HepG2 (cell line): ENCODE measurements at regions of chr1 and their contacts with region 1.

Region 1: DNA sequence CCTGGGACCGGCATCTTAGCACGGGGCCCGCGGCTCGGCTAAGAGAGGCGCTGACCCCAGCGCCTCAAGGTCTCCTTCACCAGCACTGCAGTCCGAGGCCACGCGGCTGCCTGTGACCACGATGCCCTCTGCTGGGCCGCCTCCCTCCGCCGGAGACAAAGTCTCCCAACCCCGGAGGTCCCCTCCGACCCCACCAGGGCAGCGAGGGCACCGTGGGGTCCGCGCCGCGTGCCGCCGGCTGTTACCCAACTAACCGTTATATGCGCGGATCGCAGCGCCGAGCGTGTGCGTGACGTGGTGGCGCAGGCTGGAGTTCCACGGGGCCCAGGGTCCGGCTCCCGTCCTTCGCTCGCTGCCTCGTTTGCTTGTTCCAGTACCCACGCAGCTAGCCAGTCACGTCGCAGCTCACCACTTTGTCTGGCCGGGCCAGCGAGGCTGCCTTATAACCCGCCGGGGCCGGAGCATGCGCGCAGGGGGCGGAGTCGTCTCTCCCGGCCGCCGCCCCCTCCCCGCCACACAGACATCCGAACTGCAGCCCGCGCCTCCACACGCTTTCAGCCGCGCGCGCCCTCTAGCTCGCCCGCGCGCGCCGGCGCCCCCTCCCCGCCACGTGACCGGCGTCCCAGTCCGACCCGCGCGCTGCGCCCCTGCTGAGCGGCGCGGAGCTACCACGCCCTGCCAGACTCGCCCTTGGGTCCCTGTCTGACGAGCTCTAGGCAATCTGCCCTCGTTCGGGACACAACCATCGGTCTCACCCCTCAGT is at the start of gene SLC16A1:
- DNase-seq: peak; percentile 82
- ATAC-seq: peak; percentile 85
- H3K4me3 ChIP-seq: peak within 1 kb of the TSS; percentile 78 to 91 (median 83)
- H3K27ac ChIP-seq: peak within 1 kb of the TSS; percentile 87
- H3K4me1 ChIP-seq: peaks cover 69% of the 10 kb centered on the region
- H3K27me3 ChIP-seq: no peaks in the 10 kb centered on the region; a peak in 1 of 5 replicates
- CTCF ChIP-seq: peak; percentile 69
- EP300 ChIP-seq: peak in 1 of 2 experiments; percentile 41; a peak in 1 of 4 replicates
- POLR2A ChIP-seq: peak; percentile 97 to 99
- RAD21 ChIP-seq: peak; percentile 60; the same call in 1 of the 2 replicates
- total RNA-seq, gene SLC16A1: 67.0 and 106 TPM in 2 replicates

Region 2: GRCh38 chr1:112754116-112754628 is 201.8 kb before region 1 on chr1:
- CTCF ChIA-PET with region 1: no interaction called
- POLR2A ChIA-PET with region 1: no interaction called
- in situ Hi-C with region 1: no loop called
- intact Hi-C with region 1: no loop called
- DNase-seq: no peak
- ATAC-seq: no peak
- H3K4me3 ChIP-seq: no peak overlapping the region
- H3K27ac ChIP-seq: no peak overlapping the region
- H3K4me1 ChIP-seq: no peaks in the 10 kb centered on the region
- H3K27me3 ChIP-seq: no peaks in the 10 kb centered on the region; a peak in 2 of 5 replicates
- CTCF ChIP-seq: no peak
- EP300 ChIP-seq: no peak
- POLR2A ChIP-seq: no peak
- RAD21 ChIP-seq: no peak

Region 3: DNA sequence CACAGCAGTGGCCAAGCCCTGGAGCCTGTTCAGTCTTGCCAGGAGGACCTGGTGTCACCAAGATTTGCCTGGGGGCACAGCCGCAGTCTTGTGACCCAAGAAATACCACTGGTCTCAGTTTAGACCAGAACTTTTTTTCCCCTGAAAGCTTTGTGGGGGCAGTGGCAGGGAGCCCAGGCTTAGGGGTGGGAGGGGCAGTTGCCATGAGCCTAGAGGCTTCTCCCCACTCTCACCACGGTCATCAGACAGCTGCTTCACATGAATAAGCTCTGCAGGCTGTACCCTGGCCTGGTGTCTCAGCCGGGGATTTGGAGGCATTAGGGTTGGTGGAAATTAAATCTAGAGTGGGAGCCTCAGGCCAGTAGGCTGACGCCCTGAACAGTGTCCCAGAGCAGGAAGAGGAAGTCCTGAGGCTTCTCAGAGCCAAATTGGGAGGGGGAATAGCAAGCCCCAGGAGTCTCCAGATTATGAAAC is 73.7 kb before region 1 on chr1:
- CTCF ChIA-PET with region 1: interaction called, 6 read pairs
- POLR2A ChIA-PET with region 1: interaction called, 6 read pairs
- in situ Hi-C with region 1: no loop called
- intact Hi-C with region 1: loop called (anchors 5 kb)
- DNase-seq: no peak
- ATAC-seq: peak; percentile 57
- H3K4me3 ChIP-seq: peak overlapping the region; percentile 11 to 48 (median 42); a peak in 5 of 6 replicates
- H3K27ac ChIP-seq: no peak overlapping the region
- H3K4me1 ChIP-seq: peaks cover 26% of the 10 kb centered on the region
- H3K27me3 ChIP-seq: peaks cover 5 to 15% of the 10 kb centered on the region in 2 experiments; a peak in 3 of 5 replicates
- CTCF ChIP-seq: no peak
- EP300 ChIP-seq: no peak
- POLR2A ChIP-seq: no peak
- RAD21 ChIP-seq: no peak

Region 4: DNA sequence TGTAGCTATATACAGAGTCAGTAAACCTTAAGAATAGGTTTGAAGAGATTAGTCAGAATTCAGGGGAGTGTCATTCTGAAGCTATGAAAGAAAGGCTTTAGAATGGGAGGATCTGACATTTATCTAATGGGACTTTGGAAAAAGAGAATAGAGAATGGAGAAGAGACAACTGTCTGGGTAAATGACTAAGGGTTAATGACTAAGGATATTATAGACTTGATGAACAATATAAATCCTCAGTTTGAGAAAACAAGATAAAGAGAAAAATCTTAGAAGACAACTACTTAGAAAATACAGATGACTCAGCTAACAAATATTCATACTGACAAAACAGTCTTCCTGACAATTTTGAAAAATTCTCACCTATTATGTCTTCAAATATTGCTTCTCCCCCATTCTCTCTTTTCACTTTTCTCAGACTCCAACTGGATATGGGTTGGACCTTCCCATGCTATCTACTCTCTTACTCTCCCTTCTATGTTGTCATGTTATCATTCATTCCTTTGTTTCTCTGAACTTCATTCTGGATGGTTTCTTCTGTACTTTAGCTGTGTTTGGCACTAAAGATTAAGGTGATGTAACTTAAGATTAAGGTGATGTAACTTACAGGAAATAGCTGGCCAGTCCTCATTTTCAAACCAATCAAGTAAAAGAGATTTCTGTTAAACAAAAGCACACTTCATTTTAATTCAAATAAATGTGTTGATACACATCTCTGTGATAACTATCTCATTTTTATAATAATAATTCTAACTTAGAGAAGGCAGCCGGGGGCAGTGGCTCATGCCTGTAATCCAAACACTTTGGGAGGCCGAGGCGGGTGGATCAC is 20.3 kb before region 1 on chr1:
- CTCF ChIA-PET with region 1: no interaction called
- POLR2A ChIA-PET with region 1: interaction called, 16 read pairs
- in situ Hi-C with region 1: no loop called
- intact Hi-C with region 1: no loop called
- DNase-seq: no peak
- ATAC-seq: no peak
- H3K4me3 ChIP-seq: no peak overlapping the region
- H3K27ac ChIP-seq: no peak overlapping the region
- H3K4me1 ChIP-seq: peaks cover 46% of the 10 kb centered on the region
- H3K27me3 ChIP-seq: no peaks in the 10 kb centered on the region
- CTCF ChIP-seq: no peak
- EP300 ChIP-seq: no peak
- POLR2A ChIP-seq: no peak
- RAD21 ChIP-seq: no peak

Region 5: DNA sequence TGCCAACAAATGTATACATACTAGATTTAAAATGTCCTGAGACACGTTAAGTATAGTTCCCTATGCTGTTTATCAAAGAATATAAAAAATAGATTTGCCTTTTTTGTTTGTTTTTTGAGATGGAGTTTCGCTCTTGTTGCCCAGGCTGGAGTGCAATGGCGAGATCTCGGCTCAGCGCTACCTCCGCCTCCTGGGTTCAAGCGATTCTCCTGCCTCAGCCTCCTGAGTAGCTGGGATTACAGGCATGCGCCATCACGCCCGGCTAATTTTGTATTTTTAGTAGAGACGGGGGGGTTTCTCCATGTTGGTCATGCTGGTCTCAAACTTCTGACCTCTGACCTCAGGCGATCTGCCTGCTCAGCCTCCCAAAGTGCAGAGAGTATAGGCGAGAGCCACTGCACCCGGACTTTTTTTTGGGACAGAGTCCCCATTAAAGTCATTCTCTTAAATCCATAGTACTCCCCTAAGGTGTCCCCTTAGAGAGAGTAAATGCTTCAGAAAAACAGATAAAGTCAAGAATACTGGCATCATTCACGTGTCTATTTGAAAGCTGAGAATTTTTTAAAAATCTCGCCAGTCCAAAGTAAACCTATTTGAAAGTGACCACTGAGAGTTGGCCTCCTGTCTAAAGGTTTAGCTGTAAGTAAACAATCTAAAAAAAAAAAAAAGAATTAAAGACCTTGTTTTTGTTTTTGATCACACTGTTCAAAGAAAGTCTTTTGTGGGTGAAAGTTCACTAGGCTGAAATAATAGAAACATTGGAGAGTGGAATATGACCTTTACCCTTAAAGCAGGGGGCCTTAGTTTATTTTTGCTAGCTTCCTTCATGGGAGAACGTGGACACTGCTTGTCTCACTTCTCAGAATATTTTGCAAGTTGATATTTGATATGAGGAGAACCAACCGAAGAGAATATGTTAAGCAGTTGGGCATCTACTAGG is 48.1 kb after region 1 on chr1:
- CTCF ChIA-PET with region 1: no interaction called
- POLR2A ChIA-PET with region 1: interaction called, 21 read pairs
- in situ Hi-C with region 1: no loop called
- intact Hi-C with region 1: no loop called
- DNase-seq: peak; percentile 87
- ATAC-seq: peak; percentile 91
- H3K4me3 ChIP-seq: peak overlapping the region in 1 of 3 experiments; percentile 5; a peak in 3 of 6 replicates
- H3K27ac ChIP-seq: peak overlapping the region; percentile 85
- H3K4me1 ChIP-seq: peaks cover 61% of the 10 kb centered on the region
- H3K27me3 ChIP-seq: no peaks in the 10 kb centered on the region
- CTCF ChIP-seq: no peak
- EP300 ChIP-seq: peak in 1 of 2 experiments; percentile 88; a peak in 2 of 4 replicates
- POLR2A ChIP-seq: no peak
- RAD21 ChIP-seq: no peak

Region 6: GRCh38 chr1:113027007-113027406 is 71.0 kb after region 1 on chr1:
- CTCF ChIA-PET with region 1: no interaction called
- POLR2A ChIA-PET with region 1: interaction called, 6 read pairs
- in situ Hi-C with region 1: no loop called
- intact Hi-C with region 1: loop called (anchors 5 kb)
- DNase-seq: peak; percentile 56
- ATAC-seq: peak; percentile 90
- H3K4me3 ChIP-seq: peak overlapping the region; percentile 31 to 38 (median 36); a peak in 5 of 6 replicates
- H3K27ac ChIP-seq: peak overlapping the region; percentile 60
- H3K4me1 ChIP-seq: peaks cover 69% of the 10 kb centered on the region
- H3K27me3 ChIP-seq: no peaks in the 10 kb centered on the region
- CTCF ChIP-seq: no peak
- EP300 ChIP-seq: peak in 1 of 2 experiments; percentile 42; a peak in 1 of 4 replicates
- POLR2A ChIP-seq: 0 out of 4 replicates have a peak, but pooled peaks of 1 of the 2 experiments have one; percentile 23
- RAD21 ChIP-seq: no peak

Region 7: DNA sequence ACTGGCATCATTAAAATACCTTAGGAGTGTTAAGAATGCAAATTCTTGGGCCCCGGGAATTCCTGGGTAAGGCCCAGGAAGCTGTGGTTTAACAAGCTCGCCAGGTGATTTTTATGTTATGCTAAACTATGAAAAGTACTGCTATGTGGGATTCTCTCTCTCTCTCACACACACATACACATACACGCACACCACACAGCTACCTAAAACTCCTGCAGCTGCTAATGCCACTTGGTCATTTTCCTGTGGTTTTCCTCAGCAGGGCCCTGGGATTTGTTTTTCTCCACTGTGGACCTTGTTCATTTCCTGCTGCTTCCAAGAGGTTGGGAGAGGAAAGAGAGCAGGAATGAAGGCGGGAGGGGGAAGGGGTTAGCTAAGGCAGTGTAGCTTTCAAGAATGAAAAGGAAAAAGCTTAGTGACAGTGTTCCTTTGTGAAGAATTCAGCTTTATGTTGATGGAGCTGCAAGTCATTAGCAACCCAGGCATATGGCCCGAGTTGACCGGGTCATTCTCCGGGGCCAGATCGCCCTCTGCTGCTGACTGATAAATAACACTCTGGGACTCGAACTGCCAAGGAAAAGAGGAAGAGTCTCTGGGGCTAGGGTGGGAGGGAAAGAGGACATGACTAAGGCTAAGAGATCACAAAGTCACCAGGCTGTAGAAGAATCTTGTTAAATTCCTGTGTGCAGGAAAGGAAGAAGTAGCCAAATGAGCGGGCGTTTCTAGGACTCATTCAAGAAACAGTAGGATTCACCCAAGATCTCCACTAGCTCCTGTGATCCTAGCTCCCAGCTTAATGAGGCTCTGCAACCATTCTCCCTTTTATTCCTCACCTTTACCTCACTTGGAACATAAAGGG is 86.6 kb after region 1 on chr1:
- CTCF ChIA-PET with region 1: no interaction called
- POLR2A ChIA-PET with region 1: interaction called, 14 read pairs
- in situ Hi-C with region 1: no loop called
- intact Hi-C with region 1: loop called (anchors 1 kb)
- DNase-seq: peak; percentile 68
- ATAC-seq: peak; percentile 93
- H3K4me3 ChIP-seq: peak overlapping the region; percentile 4 to 50 (median 36); a peak in 4 of 6 replicates
- H3K27ac ChIP-seq: peak overlapping the region; percentile 31
- H3K4me1 ChIP-seq: peaks cover 46% of the 10 kb centered on the region
- H3K27me3 ChIP-seq: no peaks in the 10 kb centered on the region
- CTCF ChIP-seq: peak; percentile 89
- EP300 ChIP-seq: no peak
- POLR2A ChIP-seq: no peak
- RAD21 ChIP-seq: peak; percentile 87